ENCODE measurements at regions of chr18 and their contacts with region 1.

Region 1: GRCh38 chr18:22241921-22242361 is 72.6 kb downstream of the GATA6 start:
- DNase-seq: no peak
- ATAC-seq: no peak
- H3K4me3 ChIP-seq: no peak overlapping the region
- H3K27ac ChIP-seq: no peak overlapping the region
- H3K4me1 ChIP-seq: no peaks in the 10 kb centered on the region
- H3K27me3 ChIP-seq: no peaks in the 10 kb centered on the region
- CTCF ChIP-seq: no peak

Region 2: DNA sequence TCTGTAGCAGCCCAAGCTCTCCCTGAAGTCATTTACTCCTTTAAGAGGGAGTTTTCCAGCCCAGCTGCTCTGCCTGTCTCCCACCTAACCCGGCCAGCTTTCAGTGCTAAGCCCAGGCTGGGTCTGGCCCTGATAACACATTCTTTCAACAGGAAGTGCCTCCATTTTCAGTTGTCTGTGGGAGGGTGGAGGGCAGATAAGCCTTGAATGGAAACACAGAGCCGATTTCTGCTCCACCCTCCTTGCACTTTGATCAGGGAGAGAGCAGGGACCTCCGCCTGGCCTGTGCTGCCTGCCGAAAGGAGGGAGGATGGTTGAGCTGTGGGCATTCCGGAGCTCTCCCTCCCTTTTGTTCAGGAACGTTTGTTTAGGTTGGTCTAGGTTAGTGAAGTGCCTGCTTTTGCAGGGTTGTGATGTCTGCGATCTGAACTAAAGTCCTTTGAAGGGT is 47.8 kb before region 1 on chr18:
- intact Hi-C with region 1: no loop called
- DNase-seq: no peak
- ATAC-seq: peak; percentile 11 to 65 (median 48)
- H3K4me3 ChIP-seq: peak overlapping the region in 5 of 10 donors; percentile 4 to 31 (median 12)
- H3K27ac ChIP-seq: peak overlapping the region; percentile 16 to 99 (median 74)
- H3K4me1 ChIP-seq: peaks cover 6 to 99% (median 88%) of the 10 kb centered on the region in 9 donors
- H3K27me3 ChIP-seq: no peaks in the 10 kb centered on the region
- CTCF ChIP-seq: no peak

Region 3: GRCh38 chr18:22223254-22223960 is 18.5 kb before region 1 on chr18:
- intact Hi-C with region 1: loop called in 1 of 10 experiments (anchors 1 kb)
- DNase-seq: peak; percentile 59 to 69
- ATAC-seq: peak; percentile 63 to 99 (median 84)
- H3K4me3 ChIP-seq: no peak overlapping the region
- H3K27ac ChIP-seq: no peak overlapping the region
- H3K4me1 ChIP-seq: peaks cover 0 to 12% (median 7%) of the 10 kb centered on the region in 9 donors
- H3K27me3 ChIP-seq: no peaks in the 10 kb centered on the region
- CTCF ChIP-seq: no peak

Measured in heart right ventricle (tissue), 16 donors.